Activated CD8-positive, alpha-beta T cell treated with anti-CD3 and anti-CD28 coated beads for 36 hours (primary cell): ENCODE measurements at regions of chr14 and their contacts with region 1.

Region 1: GRCh38 chr14:74612350-74613021 is 449 bp upstream of the LTBP2 start:
- DNase-seq: peak; percentile 86
- ATAC-seq: peak; percentile 87
- H3K4me3 Mint-ChIP-seq: peak overlapping the region; percentile 65
- H3K27ac Mint-ChIP-seq: no peak overlapping the region
- H3K4me1 Mint-ChIP-seq: peaks cover 35% of the 10 kb centered on the region
- H3K27me3 Mint-ChIP-seq: peaks cover 15% of the 10 kb centered on the region
- CTCF ChIP-seq: peak; percentile 53

Region 2: GRCh38 chr14:74309125-74310022 is 303.1 kb before region 1 on chr14:
- CTCF ChIA-PET with region 1: no interaction called
- POLR2A ChIA-PET with region 1: no interaction called
- intact Hi-C with region 1: no loop called
- DNase-seq: no peak
- ATAC-seq: no peak
- H3K4me3 Mint-ChIP-seq: no peak overlapping the region
- H3K27ac Mint-ChIP-seq: no peak overlapping the region
- H3K4me1 Mint-ChIP-seq: no peaks in the 10 kb centered on the region
- H3K27me3 Mint-ChIP-seq: no peaks in the 10 kb centered on the region
- CTCF ChIP-seq: no peak

Region 3: DNA sequence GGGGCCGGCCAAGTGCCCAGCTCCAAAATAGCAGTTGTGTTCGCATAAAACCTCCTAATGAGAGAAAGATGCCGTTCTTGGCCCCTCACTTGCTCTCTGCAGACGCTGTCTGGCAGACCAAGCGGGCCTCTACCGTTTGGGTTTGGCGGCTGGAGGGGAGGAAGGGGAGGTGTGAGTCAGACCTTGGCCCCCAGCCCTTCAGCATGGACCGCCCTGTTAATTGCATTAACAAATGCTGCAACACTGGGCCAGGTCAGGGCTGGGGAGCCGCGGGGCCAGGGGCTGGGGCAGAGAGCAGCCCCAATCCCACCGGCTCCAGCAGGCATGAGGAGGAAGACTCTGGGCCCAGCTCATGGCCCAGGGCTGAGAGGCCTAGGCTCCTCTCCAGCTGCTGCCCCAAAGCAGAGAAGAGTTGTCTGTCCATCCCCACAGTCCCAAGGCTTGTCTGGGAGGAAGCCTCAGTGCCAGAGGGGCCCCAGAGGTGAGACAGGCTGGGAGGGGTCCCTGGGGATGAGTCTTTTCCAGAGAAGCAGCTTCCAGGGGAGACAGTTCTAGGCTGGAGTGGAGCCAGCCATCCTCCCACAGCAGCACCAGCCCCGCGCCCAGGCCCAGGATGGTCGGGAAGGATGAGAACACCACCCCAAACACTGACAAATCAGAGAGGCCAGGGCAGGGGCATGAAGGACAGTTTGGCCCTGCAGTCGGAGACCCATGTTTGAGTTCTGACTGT is 17.3 kb before region 1 on chr14:
- CTCF ChIA-PET with region 1: interaction called, 28 read pairs
- POLR2A ChIA-PET with region 1: no interaction called
- intact Hi-C with region 1: no loop called
- DNase-seq: no peak
- ATAC-seq: no peak
- H3K4me3 Mint-ChIP-seq: no peak overlapping the region
- H3K27ac Mint-ChIP-seq: no peak overlapping the region
- H3K4me1 Mint-ChIP-seq: no peaks in the 10 kb centered on the region
- H3K27me3 Mint-ChIP-seq: no peaks in the 10 kb centered on the region
- CTCF ChIP-seq: no peak

Region 4: DNA sequence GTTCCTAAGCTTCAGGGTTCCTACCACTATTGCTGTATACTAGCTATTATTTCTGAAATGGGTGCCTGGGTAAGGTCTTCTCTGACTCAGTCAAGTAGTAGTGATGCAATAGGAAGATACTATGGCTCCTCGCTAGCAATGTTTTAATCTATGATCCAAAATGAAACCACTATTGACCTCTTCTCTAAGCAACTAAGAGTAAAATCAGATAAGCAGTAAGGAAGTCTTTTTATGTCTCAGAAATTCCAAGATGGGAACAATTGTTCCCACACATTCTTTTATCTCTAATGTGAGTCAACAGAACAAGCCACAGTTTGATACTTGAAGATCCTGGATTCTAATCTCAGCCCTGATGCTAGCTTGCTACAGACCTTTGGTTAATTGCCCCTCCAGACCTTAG is 55.3 kb after region 1 on chr14:
- CTCF ChIA-PET with region 1: interaction called, 15 read pairs
- POLR2A ChIA-PET with region 1: no interaction called
- intact Hi-C with region 1: no loop called
- DNase-seq: no peak
- ATAC-seq: peak; percentile 77
- H3K4me3 Mint-ChIP-seq: no peak overlapping the region
- H3K27ac Mint-ChIP-seq: peak overlapping the region; percentile 70
- H3K4me1 Mint-ChIP-seq: peaks cover 7% of the 10 kb centered on the region
- H3K27me3 Mint-ChIP-seq: no peaks in the 10 kb centered on the region
- CTCF ChIP-seq: no peak

Region 5: DNA sequence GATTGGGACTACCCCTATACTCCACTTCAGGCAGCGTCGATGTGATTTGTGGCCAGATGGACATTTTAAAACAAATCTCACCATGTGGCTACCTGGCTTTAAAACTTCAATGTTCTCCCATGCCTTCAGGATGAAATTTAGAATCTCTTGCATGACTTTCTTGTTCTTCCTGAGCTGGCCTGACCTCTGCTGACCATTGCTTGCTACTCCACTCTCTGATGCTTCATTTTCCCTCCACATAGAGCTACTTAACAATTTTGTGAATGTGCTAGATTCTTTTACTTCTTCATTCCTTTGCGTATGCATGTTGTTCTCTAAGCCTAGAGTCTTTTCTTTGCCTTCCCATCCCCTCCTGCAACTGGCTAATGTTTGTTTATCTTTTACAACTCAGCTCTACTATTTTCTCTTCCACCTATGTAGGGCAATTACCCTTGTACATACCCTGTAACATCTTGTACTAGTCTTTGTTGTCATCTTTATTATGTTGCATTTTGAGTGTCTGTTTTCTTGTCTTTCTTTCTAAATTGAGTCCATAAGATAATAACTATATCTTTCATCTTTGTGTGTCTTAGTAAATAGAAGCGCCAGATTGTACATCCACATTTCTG is 191.8 kb after region 1 on chr14:
- CTCF ChIA-PET with region 1: interaction called, 22 read pairs
- POLR2A ChIA-PET with region 1: no interaction called
- intact Hi-C with region 1: no loop called
- DNase-seq: peak; percentile 45
- ATAC-seq: peak; percentile 77
- H3K4me3 Mint-ChIP-seq: no peak overlapping the region
- H3K27ac Mint-ChIP-seq: no peak overlapping the region
- H3K4me1 Mint-ChIP-seq: peaks cover 2% of the 10 kb centered on the region
- H3K27me3 Mint-ChIP-seq: no peaks in the 10 kb centered on the region
- CTCF ChIP-seq: peak; percentile 53